CD14-positive monocyte (primary cell): ENCODE measurements at regions of chr12 and their contacts with region 1.

Region 1: DNA sequence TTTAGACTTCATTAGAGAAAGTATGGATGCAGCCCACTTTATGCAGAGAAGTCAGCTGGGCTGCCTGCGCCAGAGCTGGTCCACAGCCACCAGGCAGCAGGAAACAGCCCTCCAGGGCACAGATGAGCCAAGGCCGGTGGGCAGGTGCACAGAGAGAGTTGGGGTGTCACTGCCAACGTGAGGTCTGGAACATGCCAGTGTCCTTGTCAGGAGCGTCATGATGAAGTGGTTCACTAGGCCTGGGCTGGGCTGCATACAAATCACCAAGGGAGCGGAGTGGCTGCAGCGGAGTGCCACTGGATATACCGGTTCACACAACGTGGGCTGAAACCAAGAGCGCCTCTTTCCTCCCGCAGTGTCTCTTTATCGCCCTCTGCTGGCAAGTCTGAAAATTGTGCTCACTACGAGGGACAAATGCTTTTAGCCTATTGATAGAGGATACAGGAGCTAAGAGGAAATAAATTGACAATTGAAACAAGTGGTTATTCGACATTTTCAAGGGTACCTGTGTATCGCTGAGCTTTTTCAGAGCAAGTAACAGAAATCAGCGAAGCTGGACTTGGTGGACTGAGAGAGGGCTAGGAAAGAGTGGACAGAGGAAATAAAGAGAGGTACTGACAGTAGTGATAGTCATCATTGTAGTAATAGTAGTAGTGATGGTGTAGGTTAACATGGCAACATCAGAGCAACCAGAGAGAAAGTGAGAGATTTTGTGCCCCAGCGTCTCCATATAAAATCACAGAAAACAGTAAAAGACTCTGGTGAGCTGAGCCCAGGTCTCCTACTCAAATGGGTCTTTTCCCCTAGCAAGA is 52.0 kb upstream of the ITPR2 start:
- DNase-seq: peak; percentile 74 to 79 (median 77)
- H3K4me3 ChIP-seq: peak overlapping the region in 1 of 3 experiments; percentile 64
- H3K4me3 Mint-ChIP-seq: peak overlapping the region; percentile 68 to 88
- H3K27ac ChIP-seq: no peak overlapping the region
- H3K27ac Mint-ChIP-seq: peak overlapping the region in 1 of 7 donors; percentile 71
- H3K4me1 ChIP-seq: peaks cover 4 to 6% of the 10 kb centered on the region in 2 donors
- H3K4me1 Mint-ChIP-seq: peaks cover 11% of the 10 kb centered on the region
- H3K27me3 ChIP-seq: no peaks in the 10 kb centered on the region
- H3K27me3 Mint-ChIP-seq: peaks cover 2 to 3% (median 2%) of the 10 kb centered on the region in 3 donors
- CTCF ChIP-seq: peak; percentile 92

Region 2: DNA sequence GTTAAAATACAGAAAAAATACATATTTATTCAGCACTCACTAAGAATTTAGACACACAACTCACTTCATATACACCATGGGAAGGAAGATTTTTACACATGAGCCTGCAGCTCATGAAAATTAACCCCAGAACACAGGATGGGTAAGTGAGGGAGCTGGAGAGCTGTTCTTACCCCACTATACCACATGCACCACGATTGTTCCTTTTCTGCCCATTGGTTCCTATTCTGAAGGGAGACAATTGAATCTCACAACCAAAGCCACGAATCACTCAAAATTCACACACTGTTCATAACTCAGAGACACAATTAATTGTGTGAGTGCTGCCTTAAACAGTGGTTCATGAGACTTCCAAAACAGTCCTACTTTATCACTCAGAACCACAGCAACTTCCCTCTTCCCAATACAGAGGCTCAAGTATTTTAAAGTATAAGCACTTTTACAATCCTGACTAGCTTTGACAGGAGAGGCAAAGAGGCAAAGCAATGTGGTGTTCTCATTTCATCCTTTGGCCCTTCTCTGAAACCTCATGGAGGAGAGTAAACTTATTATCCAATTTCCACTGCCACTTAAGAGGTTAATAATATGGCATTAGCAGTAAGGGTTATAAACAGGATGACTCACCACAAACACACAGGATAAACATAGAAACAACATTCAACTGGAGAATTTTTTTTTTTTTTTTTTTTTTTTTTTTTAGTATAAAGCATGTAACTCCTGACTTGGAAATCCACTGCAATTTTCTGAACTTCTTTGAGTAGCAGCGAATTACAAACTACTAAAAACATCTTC is 111.5 kb before region 1 on chr12:
- intact Hi-C with region 1: no loop called
- DNase-seq: no peak
- H3K4me3 ChIP-seq: no peak overlapping the region
- H3K4me3 Mint-ChIP-seq: no peak overlapping the region
- H3K27ac ChIP-seq: no peak overlapping the region
- H3K27ac Mint-ChIP-seq: no peak overlapping the region
- H3K4me1 ChIP-seq: peaks cover 22 to 27% of the 10 kb centered on the region in 2 donors
- H3K4me1 Mint-ChIP-seq: peaks cover 34% of the 10 kb centered on the region
- H3K27me3 ChIP-seq: no peaks in the 10 kb centered on the region
- H3K27me3 Mint-ChIP-seq: peaks cover 0 to 2% (median 0%) of the 10 kb centered on the region in 3 donors
- CTCF ChIP-seq: no peak

Region 3: GRCh38 chr12:26853303-26854030 is 31.5 kb before region 1 on chr12:
- intact Hi-C with region 1: loop called (anchors 2 to 5 kb)
- DNase-seq: peak; percentile 59 to 74 (median 66)
- H3K4me3 ChIP-seq: no peak overlapping the region
- H3K4me3 Mint-ChIP-seq: peak overlapping the region; percentile 54 to 80
- H3K27ac ChIP-seq: peak overlapping the region in 1 of 2 donors; percentile 17
- H3K27ac Mint-ChIP-seq: peak overlapping the region in 4 of 7 donors; percentile 20 to 87 (median 76)
- H3K4me1 ChIP-seq: peaks cover 7 to 8% of the 10 kb centered on the region in 2 donors
- H3K4me1 Mint-ChIP-seq: peaks cover 2% of the 10 kb centered on the region
- H3K27me3 ChIP-seq: no peaks in the 10 kb centered on the region
- H3K27me3 Mint-ChIP-seq: no peaks in the 10 kb centered on the region
- CTCF ChIP-seq: peak; percentile 85